Heart left ventricle (tissue), 16 donors: ENCODE measurements at regions of chr17 and their contacts with region 1.

Region 1: GRCh38 chr17:16117149-16117548 is 98.2 kb downstream of the NCOR1 start:
- DNase-seq: no peak
- ATAC-seq: no peak
- H3K4me3 ChIP-seq: no peak overlapping the region
- H3K27ac ChIP-seq: no peak overlapping the region
- H3K4me1 ChIP-seq: peaks cover 0 to 5% (median 0%) of the 10 kb centered on the region in 12 donors
- H3K27me3 ChIP-seq: no peaks in the 10 kb centered on the region
- CTCF ChIP-seq: no peak
- POLR2A ChIP-seq: no peak

Region 2: GRCh38 chr17:15931394-15931793 is 185.8 kb before region 1 on chr17:
- intact Hi-C with region 1: no loop called
- DNase-seq: no peak
- ATAC-seq: no peak
- H3K4me3 ChIP-seq: no peak overlapping the region
- H3K27ac ChIP-seq: no peak overlapping the region
- H3K4me1 ChIP-seq: peaks cover 0 to 15% (median 0%) of the 10 kb centered on the region in 12 donors
- H3K27me3 ChIP-seq: no peaks in the 10 kb centered on the region
- CTCF ChIP-seq: no peak
- POLR2A ChIP-seq: no peak

Region 3: GRCh38 chr17:16068323-16068722 is 48.8 kb before region 1 on chr17:
- intact Hi-C with region 1: loop called in 1 of 10 experiments (anchors 10 kb)
- DNase-seq: no peak
- ATAC-seq: no peak
- H3K4me3 ChIP-seq: no peak overlapping the region
- H3K27ac ChIP-seq: no peak overlapping the region
- H3K4me1 ChIP-seq: no peaks in the 10 kb centered on the region
- H3K27me3 ChIP-seq: no peaks in the 10 kb centered on the region
- CTCF ChIP-seq: no peak
- POLR2A ChIP-seq: no peak

Region 4: DNA sequence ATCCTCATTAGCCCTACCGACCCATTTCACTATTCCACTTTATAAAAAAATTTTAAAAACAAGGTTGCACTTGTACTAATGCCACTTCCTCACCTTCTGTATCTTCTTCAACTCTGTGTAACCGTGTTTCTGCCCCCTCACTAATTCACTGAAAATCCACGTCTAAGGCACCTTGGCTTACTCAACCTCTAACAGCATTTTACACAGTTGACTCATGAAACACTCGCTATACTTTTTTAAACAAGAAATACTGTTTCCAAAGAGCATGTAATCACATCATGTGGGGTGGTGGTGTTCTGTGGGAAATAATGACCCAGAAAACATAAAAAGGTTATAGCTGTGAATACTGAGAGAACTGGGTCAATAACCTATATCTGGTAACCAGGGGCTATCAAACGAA is 18.3 kb after region 1 on chr17:
- intact Hi-C with region 1: no loop called
- DNase-seq: no peak
- ATAC-seq: no peak
- H3K4me3 ChIP-seq: no peak overlapping the region
- H3K27ac ChIP-seq: no peak overlapping the region
- H3K4me1 ChIP-seq: no peaks in the 10 kb centered on the region
- H3K27me3 ChIP-seq: no peaks in the 10 kb centered on the region
- CTCF ChIP-seq: no peak
- POLR2A ChIP-seq: no peak

Region 5: GRCh38 chr17:16150251-16150856 is 33.2 kb after region 1 on chr17:
- intact Hi-C with region 1: no loop called
- DNase-seq: no peak
- ATAC-seq: no peak
- H3K4me3 ChIP-seq: no peak overlapping the region
- H3K27ac ChIP-seq: no peak overlapping the region
- H3K4me1 ChIP-seq: peaks cover 0 to under 1% (median 0%) of the 10 kb centered on the region in 12 donors
- H3K27me3 ChIP-seq: no peaks in the 10 kb centered on the region
- CTCF ChIP-seq: no peak
- POLR2A ChIP-seq: no peak